CD8-positive, alpha-beta memory T cell (primary cell): ENCODE measurements at regions of chrX and their contacts with region 1.

Region 1: DNA sequence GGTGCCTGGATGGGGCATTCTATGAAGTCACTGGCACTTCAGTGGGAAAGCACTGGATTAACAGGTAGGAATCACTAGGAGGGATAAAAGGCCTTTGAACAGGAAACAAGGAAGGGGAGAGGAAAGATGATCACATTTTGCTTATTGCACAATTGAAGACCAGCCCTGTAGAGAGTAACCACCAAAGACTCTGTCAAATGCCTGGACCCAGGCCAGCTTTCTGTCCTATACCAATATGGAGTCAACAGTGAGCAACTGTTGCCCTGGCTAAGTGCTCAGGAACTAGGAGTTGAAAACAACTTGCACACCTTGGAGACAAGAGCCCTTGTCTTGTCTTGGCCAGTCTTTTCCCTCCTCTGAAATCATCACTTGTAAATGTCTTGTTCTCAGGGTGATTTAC is 14.1 kb upstream of the RTL3 start:
- DNase-seq: no peak
- H3K4me3 ChIP-seq: no peak overlapping the region
- H3K4me3 Mint-ChIP-seq: no peak overlapping the region
- H3K27ac ChIP-seq: no peak overlapping the region
- H3K27ac Mint-ChIP-seq: no peak overlapping the region
- H3K4me1 ChIP-seq: no peaks in the 10 kb centered on the region
- H3K4me1 Mint-ChIP-seq: no peaks in the 10 kb centered on the region
- H3K27me3 ChIP-seq: no peaks in the 10 kb centered on the region
- H3K27me3 Mint-ChIP-seq: peaks cover 0 to 2% of the 10 kb centered on the region in 2 donors

Region 2: DNA sequence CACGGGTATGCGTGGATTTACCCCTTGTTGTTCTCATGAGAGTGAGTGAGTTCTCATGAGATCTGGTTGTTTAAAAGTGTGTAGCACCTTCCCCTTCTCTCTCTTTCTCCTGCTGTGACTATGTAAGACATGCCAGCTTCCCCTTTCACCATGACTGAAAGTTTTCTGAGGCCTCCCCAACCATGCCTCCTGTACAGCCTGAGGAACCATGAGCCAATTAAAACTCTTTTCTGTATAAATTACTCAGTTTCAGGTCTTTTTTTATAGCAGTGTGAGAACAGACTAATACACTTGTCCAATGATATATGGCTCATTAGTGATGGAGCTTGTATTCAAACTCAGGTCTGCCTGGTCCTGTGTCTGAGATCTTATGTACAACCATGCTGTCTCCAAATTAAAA is 14.3 kb after region 1 on chrX:
- CTCF ChIA-PET with region 1: no interaction called
- POLR2A ChIA-PET with region 1: no interaction called
- DNase-seq: no peak
- H3K4me3 ChIP-seq: no peak overlapping the region
- H3K4me3 Mint-ChIP-seq: no peak overlapping the region
- H3K27ac ChIP-seq: no peak overlapping the region
- H3K27ac Mint-ChIP-seq: no peak overlapping the region
- H3K4me1 ChIP-seq: no peaks in the 10 kb centered on the region
- H3K4me1 Mint-ChIP-seq: no peaks in the 10 kb centered on the region
- H3K27me3 ChIP-seq: no peaks in the 10 kb centered on the region
- H3K27me3 Mint-ChIP-seq: peaks cover 0 to 3% of the 10 kb centered on the region in 2 donors

Region 3: GRCh38 chrX:79065696-79066095 is 392.4 kb after region 1 on chrX:
- CTCF ChIA-PET with region 1: no interaction called
- POLR2A ChIA-PET with region 1: interaction called, 11 read pairs
- DNase-seq: no peak
- H3K4me3 ChIP-seq: no peak overlapping the region
- H3K4me3 Mint-ChIP-seq: no peak overlapping the region
- H3K27ac ChIP-seq: no peak overlapping the region
- H3K27ac Mint-ChIP-seq: peak overlapping the region in 1 of 8 donors; percentile 41
- H3K4me1 ChIP-seq: no peaks in the 10 kb centered on the region
- H3K4me1 Mint-ChIP-seq: peaks cover 0 to 10% (median 0%) of the 10 kb centered on the region in 3 donors
- H3K27me3 ChIP-seq: no peaks in the 10 kb centered on the region
- H3K27me3 Mint-ChIP-seq: peaks cover 0 to 4% of the 10 kb centered on the region in 2 donors